B cell (primary cell): ENCODE measurements at regions of chr9 and their contacts with region 1.

Region 1: GRCh38 chr9:111691672-111692329 is 30.4 kb downstream of the GNG10 start:
- DNase-seq: peak; percentile 26
- ATAC-seq: no peak
- H3K4me3 ChIP-seq: no peak overlapping the region
- H3K4me3 Mint-ChIP-seq: no peak overlapping the region
- H3K27ac ChIP-seq: no peak overlapping the region
- H3K27ac Mint-ChIP-seq: no peak overlapping the region
- H3K4me1 ChIP-seq: no peaks in the 10 kb centered on the region
- H3K4me1 Mint-ChIP-seq: no peaks in the 10 kb centered on the region
- H3K27me3 ChIP-seq: no peaks in the 10 kb centered on the region
- H3K27me3 Mint-ChIP-seq: no peaks in the 10 kb centered on the region
- CTCF ChIP-seq: no peak

Region 2: DNA sequence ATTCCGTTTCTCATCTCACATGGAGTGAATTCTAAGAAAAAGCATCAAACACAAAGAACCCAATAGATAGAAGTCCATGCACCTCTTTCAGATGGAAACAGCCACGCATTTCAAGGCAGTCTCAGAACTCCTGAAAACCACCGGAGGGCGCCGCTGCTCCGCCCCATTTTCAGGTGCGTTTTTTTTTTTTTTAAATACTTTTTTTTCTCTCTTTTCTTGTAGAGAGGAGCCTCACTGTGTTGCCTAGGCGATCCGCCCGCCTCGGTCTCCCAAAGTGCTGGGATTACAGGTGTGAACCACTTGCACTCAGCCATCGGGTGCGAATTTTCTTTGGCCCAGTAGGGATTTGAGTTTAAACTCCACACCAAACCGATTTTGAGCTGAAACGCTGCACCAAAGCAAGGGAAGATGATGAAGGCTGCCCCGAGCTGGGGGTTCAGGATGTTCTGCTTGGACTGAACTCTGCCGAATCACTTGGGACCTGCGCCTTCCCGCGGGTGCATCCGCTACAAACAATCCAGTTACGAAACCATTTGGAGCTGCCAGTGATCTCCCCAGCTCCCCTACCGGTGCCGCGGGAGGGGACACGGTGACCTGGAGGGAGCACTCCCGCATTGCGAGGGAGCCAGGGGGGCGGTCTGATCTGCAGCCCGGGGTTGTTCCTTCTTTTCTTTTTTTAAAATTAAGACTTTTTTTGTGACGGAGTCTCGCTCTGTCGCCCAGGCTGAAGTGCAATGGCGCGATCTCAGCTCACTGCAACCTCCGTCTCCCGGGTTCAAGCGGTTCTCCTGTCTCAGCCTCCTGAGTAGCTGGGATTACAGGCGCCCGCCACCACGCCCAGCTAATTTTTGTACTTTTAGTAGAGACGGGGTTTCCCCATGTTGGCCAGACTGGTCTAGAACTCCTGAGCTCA is 93.7 kb before region 1 on chr9:
- CTCF ChIA-PET with region 1: interaction called, 4 read pairs
- POLR2A ChIA-PET with region 1: no interaction called
- intact Hi-C with region 1: loop called (anchors 1 kb)
- DNase-seq: peak; percentile 75
- ATAC-seq: peak; percentile 69
- H3K4me3 ChIP-seq: peak overlapping the region; percentile 39 to 76 (median 59)
- H3K4me3 Mint-ChIP-seq: peak overlapping the region; percentile 87
- H3K27ac ChIP-seq: no peak overlapping the region
- H3K27ac Mint-ChIP-seq: peak overlapping the region; percentile 59
- H3K4me1 ChIP-seq: peaks cover 22 to 23% of the 10 kb centered on the region in 2 donors
- H3K4me1 Mint-ChIP-seq: peaks cover 25% of the 10 kb centered on the region
- H3K27me3 ChIP-seq: peaks cover 0 to 39% (median 20%) of the 10 kb centered on the region in 4 experiments
- H3K27me3 Mint-ChIP-seq: peaks cover 42% of the 10 kb centered on the region
- CTCF ChIP-seq: peak; percentile 76